Activated B cell treated with CpG ODN at 0.5 μM for 24 hours (primary cell): ENCODE measurements at regions of chr15 and their contacts with region 1.

Region 1: DNA sequence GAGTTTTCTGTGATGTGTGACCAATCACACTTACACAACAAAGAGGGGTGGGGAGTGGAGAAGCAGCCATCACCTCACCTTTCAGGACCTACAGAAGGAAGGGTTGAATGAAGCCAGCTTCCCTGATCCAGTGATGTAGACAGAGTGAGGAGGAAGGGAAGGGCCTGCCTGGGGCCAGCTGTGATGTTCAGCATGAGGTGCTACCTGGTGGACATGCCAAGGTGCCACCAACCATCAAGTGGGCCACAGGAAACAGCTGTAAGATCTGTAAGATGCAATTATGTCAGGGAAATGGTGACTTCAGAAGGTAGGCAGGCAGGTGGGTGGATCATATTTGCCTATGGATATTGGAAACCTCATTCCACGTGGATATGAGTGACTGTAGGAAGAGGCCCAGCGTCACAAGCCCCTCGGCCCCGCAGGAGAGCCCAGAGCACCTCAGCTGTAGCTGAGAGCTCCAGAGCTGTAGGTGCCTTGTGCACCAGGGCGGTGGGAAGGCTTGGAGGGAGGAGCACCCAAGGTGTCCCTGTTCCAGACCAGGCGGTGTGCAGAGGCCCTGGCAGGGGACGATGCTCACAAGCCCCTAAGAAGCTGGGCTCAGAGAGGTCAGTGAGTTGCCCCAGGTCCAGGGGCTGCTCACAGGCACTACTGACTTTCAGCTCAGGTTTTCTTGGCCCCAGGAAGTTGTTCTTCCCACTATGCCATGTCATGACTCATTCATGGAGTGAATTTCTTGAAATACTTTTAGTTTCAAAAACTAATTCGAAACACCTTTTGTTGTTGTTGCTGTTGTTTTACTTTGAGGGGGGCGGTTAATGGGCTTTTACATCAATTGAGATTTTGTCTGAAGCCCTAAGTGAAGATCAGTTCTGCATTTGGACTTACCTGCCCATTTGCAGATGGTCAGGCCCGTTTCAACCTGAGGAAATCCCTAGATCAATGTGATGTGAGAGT is 94.2 kb upstream of the ALDH1A3 start:
- DNase-seq: no peak
- ATAC-seq: no peak
- H3K4me3 Mint-ChIP-seq: no peak overlapping the region
- H3K27ac Mint-ChIP-seq: no peak overlapping the region
- H3K4me1 Mint-ChIP-seq: no peaks in the 10 kb centered on the region
- H3K27me3 Mint-ChIP-seq: peaks cover 8% of the 10 kb centered on the region
- CTCF ChIP-seq: no peak

Region 2: GRCh38 chr15:100448492-100448891 is 337.0 kb before region 1 on chr15:
- CTCF ChIA-PET with region 1: no interaction called
- POLR2A ChIA-PET with region 1: no interaction called
- intact Hi-C with region 1: no loop called
- DNase-seq: no peak
- ATAC-seq: no peak
- H3K4me3 Mint-ChIP-seq: no peak overlapping the region
- H3K27ac Mint-ChIP-seq: no peak overlapping the region
- H3K4me1 Mint-ChIP-seq: no peaks in the 10 kb centered on the region
- H3K27me3 Mint-ChIP-seq: peaks cover 7% of the 10 kb centered on the region
- CTCF ChIP-seq: no peak

Region 3: DNA sequence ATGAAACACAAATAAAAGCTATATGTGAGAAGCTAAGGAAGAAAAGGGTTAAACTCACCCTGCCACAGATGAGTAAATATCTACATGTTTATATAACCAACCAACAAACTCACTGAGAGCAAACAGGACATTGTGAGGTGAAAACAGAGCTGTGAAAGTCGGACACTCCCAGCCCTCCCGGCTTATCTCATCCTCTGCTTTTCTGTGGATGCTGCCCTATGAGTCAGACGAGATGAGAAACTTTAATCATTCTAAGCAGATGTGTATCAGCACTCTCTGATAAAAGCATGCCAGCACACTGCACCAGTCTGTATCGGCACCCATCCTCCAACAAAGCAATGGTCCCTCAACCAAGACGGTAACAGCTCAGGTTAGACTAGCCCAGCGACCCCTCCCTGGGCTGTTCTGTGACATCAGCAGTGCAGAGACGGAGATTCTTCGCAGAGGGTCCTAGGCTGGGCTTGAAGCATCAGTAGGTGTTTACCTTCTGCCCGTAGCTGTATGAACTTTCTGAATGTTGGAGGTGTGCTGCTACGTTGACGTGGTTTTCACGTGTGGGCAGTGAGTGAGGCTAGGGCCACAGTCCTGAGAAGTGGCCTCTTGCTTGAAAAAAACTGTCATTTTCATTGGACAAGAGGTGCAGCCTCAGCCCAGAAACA is 25.6 kb before region 1 on chr15:
- CTCF ChIA-PET with region 1: no interaction called
- POLR2A ChIA-PET with region 1: no interaction called
- intact Hi-C with region 1: no loop called
- DNase-seq: no peak
- ATAC-seq: no peak
- H3K4me3 Mint-ChIP-seq: no peak overlapping the region
- H3K27ac Mint-ChIP-seq: no peak overlapping the region
- H3K4me1 Mint-ChIP-seq: no peaks in the 10 kb centered on the region
- H3K27me3 Mint-ChIP-seq: peaks cover 34% of the 10 kb centered on the region
- CTCF ChIP-seq: no peak

Region 4: GRCh38 chr15:100809151-100809550 is 23.7 kb after region 1 on chr15:
- CTCF ChIA-PET with region 1: no interaction called
- POLR2A ChIA-PET with region 1: no interaction called
- intact Hi-C with region 1: loop called (anchors 2 kb)
- DNase-seq: no peak
- ATAC-seq: no peak
- H3K4me3 Mint-ChIP-seq: no peak overlapping the region
- H3K27ac Mint-ChIP-seq: no peak overlapping the region
- H3K4me1 Mint-ChIP-seq: no peaks in the 10 kb centered on the region
- H3K27me3 Mint-ChIP-seq: no peaks in the 10 kb centered on the region
- CTCF ChIP-seq: no peak